ENCODE measurements at regions of chr1 and their contacts with region 1.

Region 1: DNA sequence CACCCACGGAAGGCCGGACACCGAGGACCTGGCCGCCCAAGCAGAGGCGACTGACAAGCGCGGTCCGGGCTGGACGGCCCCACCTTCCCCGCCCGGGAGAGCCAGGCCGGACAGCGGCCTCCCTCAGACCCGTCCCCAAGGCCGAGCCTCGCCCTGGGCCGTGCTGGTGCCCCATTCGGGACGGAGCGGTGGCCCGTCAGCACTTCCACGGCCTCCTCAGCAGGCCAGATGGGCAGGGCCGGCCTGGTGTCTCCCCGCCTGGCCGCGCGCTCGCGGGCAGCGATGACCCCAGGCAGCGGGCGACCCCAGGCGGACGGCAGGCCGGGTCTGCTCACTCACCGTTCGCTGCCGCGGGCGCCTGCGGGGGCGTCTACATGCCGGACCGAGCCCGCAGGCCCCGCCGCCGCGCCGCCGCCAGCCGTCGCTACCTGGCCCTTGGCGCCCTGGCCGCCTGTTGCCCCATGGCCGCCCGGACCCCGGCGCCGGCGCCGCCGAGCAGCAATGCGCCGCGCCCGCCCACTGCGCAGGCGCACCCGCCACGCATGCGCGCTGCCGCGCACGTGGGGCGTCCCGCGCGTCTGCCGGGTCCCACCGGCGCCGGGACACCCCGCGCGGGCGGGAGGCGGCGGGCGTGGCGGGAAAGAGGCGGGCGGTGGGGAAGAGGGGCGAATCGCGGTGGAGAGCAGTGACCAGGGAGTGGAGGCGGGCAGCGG is at the start of gene NADK:
- DNase-seq: peak; percentile 87 to 94 (median 92)
- ATAC-seq: peak; percentile 41
- H3K4me3 ChIP-seq: peak within 1 kb of the TSS; percentile 88
- H3K27ac ChIP-seq: peak within 1 kb of the TSS; percentile 94
- H3K4me1 ChIP-seq: peaks cover 65 to 73% of the 10 kb centered on the region in 2 experiments
- H3K27me3 ChIP-seq: no peaks in the 10 kb centered on the region
- CTCF ChIP-seq: peak in 2 of 3 experiments; percentile 3 to 23; a peak in 1 of 6 replicates
- EP300 ChIP-seq: no peak
- POLR2A ChIP-seq: no peak; the same call in 1 of the 2 replicates
- RAD21 ChIP-seq: peak in 1 of 2 experiments; percentile 34; a peak in 2 of 4 replicates
- polyA plus RNA-seq, gene NADK: 1.5 to 2.1 TPM

Region 2: GRCh38 chr1:1758692-1759455 is 19.2 kb before region 1 on chr1:
- CTCF ChIA-PET with region 1: no interaction called
- POLR2A ChIA-PET with region 1: interaction called, 5 read pairs
- in situ Hi-C with region 1: no loop called
- intact Hi-C with region 1: loop called (anchors 2 kb)
- DNase-seq: peak; percentile 88 to 98 (median 92)
- ATAC-seq: peak; percentile 97
- H3K4me3 ChIP-seq: no peak overlapping the region
- H3K27ac ChIP-seq: peak overlapping the region; percentile 87
- H3K4me1 ChIP-seq: peaks cover 16 to 55% of the 10 kb centered on the region in 2 experiments
- H3K27me3 ChIP-seq: no peaks in the 10 kb centered on the region
- CTCF ChIP-seq: peak in 1 of 3 experiments; percentile 20; a peak in 1 of 6 replicates
- EP300 ChIP-seq: peak; percentile 52; the same call in 1 of the 2 replicates
- POLR2A ChIP-seq: peak; percentile 74
- RAD21 ChIP-seq: peak in 1 of 2 experiments; percentile 14; a peak in 1 of 4 replicates

Region 3: GRCh38 chr1:1788646-1789431 is 10.7 kb after region 1 on chr1:
- CTCF ChIA-PET with region 1: no interaction called
- POLR2A ChIA-PET with region 1: interaction called, 12 read pairs
- in situ Hi-C with region 1: no loop called
- intact Hi-C with region 1: no loop called
- DNase-seq: peak; percentile 35 to 57 (median 44)
- ATAC-seq: peak; percentile 65; the same call in 2 of the 3 replicates
- H3K4me3 ChIP-seq: no peak overlapping the region
- H3K27ac ChIP-seq: no peak overlapping the region
- H3K4me1 ChIP-seq: peaks cover 0 to 3% of the 10 kb centered on the region in 2 experiments; a peak in 1 of 5 replicates
- H3K27me3 ChIP-seq: no peaks in the 10 kb centered on the region; a peak in 1 of 5 replicates
- CTCF ChIP-seq: peak; percentile 55 to 73 (median 60)
- EP300 ChIP-seq: no peak
- POLR2A ChIP-seq: no peak
- RAD21 ChIP-seq: peak in 1 of 2 experiments; percentile 45; a peak in 2 of 4 replicates